PC-9 (cell line): ENCODE measurements at regions of chr12 and their contacts with region 1.

Region 1: DNA sequence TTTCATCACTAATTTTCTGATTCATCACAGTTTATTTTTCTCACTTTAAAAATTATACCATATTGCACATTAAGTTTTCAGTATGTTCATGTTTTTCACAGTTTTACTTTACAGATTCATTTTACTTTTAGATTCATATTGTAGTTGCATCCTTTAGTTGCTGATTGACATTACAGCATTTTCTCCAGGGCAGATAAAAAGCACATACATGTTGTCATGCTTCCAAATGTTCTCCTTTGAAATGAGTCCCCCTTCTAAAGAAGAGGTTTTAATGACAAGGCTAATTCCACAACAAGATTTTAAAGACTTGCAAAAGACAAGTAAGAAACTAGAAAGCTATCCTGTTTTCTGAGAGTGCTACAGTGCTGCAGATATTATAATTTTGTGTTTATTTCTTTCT is 72.1 kb upstream of the RASSF8 start:
- DNase-seq: no peak
- H3K4me3 ChIP-seq: no peak overlapping the region
- H3K27ac ChIP-seq: no peak overlapping the region
- H3K4me1 ChIP-seq: 0 out of 2 replicates have a peak, but pooled peaks cover 2% of the 10 kb centered on the region
- H3K27me3 ChIP-seq: no peaks in the 10 kb centered on the region
- CTCF ChIP-seq: no peak

Region 2: DNA sequence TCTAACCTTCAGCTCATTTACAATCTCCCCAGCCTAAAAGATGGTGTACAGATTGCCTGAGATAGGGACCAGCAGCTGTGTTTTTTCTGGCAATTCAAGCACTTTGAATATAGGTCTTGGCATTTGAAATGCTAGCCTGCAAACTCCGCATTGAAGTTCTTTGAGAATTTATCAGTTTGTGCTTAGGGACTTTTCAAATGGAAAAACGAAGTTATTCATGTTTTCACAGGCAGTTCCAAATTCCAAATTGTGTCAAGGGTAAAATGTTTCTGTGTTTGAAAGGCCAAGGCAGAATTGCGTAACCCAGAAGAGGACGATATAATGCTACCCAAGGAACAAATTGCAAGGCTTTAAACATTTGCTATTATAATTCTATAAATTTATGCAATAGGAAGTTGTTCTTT is 96.9 kb before region 1 on chr12:
- CTCF ChIA-PET with region 1: no interaction called
- POLR2A ChIA-PET with region 1: no interaction called
- intact Hi-C with region 1: no loop called
- DNase-seq: no peak
- H3K4me3 ChIP-seq: no peak overlapping the region
- H3K27ac ChIP-seq: no peak overlapping the region
- H3K4me1 ChIP-seq: no peaks in the 10 kb centered on the region; the same call in 1 of the 2 replicates
- H3K27me3 ChIP-seq: no peaks in the 10 kb centered on the region
- CTCF ChIP-seq: no peak

Region 3: GRCh38 chr12:25825446-25825845 is 61.0 kb before region 1 on chr12:
- CTCF ChIA-PET with region 1: no interaction called
- POLR2A ChIA-PET with region 1: no interaction called
- intact Hi-C with region 1: no loop called
- DNase-seq: no peak
- H3K4me3 ChIP-seq: no peak overlapping the region
- H3K27ac ChIP-seq: no peak overlapping the region
- H3K4me1 ChIP-seq: peaks cover 21% of the 10 kb centered on the region
- H3K27me3 ChIP-seq: no peaks in the 10 kb centered on the region
- CTCF ChIP-seq: no peak

Region 4: DNA sequence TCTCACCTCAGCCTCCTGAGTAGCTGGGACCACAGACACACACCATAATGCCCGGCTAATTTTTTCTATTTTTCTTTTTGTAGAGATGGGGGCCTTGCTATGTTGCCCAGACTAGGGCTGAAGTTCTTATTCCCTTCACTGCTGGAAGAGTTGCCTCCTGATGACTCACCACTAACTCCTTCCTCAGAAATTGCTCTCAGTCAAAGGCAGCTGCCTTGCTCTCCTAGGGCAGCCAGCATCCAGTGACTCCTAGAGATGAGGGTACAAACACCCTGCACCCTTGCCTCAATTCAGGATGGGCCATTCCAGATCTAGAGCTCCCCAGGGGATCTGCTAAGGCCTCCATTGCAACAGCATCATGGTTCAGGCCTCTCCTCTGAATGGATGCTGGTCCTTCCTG is 18.0 kb after region 1 on chr12:
- CTCF ChIA-PET with region 1: no interaction called
- POLR2A ChIA-PET with region 1: interaction called, 10 read pairs
- intact Hi-C with region 1: no loop called
- DNase-seq: no peak
- H3K4me3 ChIP-seq: no peak overlapping the region
- H3K27ac ChIP-seq: no peak overlapping the region
- H3K4me1 ChIP-seq: no peaks in the 10 kb centered on the region
- H3K27me3 ChIP-seq: no peaks in the 10 kb centered on the region
- CTCF ChIP-seq: no peak

Region 5: DNA sequence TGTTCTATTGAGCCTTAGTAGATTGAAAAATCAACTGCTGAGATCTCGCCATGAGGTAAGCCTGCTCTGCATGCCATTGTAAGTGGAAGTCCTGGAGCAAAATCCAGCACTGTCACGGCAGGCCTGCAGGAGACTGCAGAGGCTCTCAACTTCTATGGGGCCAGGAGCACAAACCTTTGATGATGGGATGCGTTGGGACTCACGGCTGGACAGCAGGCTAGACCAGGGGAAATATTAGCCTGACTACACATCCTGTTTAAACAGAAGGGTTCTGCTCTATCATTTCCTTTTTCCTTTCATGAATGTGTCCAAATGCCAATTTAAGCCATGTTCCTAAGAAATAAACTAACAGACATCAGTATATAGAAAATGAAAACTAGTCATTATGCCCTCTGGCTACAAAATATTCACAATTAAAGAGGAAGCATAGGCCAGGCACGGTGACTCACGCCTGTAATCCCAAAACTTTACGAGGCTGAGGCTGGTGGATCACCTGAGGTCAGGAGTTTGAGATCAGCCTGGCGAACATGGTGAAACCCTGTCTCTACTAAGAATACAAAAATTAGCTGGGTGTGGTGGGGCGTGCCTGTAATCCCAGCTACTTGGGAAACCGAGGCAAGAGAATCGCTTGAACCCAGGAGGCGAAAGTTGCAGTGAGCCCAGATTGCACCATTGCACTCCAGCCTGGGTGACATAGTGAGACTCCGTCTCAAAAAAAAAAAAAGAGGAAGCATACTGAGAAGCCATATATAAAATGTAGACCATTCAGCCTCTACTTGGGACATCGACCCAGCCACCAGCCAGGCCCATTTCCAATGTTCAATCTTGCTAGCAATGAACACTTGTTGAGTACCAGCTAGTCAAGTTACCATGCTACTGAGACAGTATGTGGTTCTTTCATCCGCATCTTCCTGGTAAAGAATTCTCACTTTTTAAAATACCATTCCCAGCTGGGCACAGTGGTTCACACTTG is 38.4 kb after region 1 on chr12:
- CTCF ChIA-PET with region 1: no interaction called
- POLR2A ChIA-PET with region 1: no interaction called
- intact Hi-C with region 1: no loop called
- DNase-seq: peak; percentile 17 to 89
- H3K4me3 ChIP-seq: no peak overlapping the region
- H3K27ac ChIP-seq: peak overlapping the region; percentile 48
- H3K4me1 ChIP-seq: peaks cover 19% of the 10 kb centered on the region
- H3K27me3 ChIP-seq: no peaks in the 10 kb centered on the region
- CTCF ChIP-seq: no peak